Sciatic nerve (tissue), 2 donors: ENCODE measurements at regions of chr4 and their contacts with region 1.

Region 1: GRCh38 chr4:150164956-150165629 is 86.8 kb downstream of the DCLK2 start:
- DNase-seq: no peak
- ATAC-seq: no peak

Region 2: DNA sequence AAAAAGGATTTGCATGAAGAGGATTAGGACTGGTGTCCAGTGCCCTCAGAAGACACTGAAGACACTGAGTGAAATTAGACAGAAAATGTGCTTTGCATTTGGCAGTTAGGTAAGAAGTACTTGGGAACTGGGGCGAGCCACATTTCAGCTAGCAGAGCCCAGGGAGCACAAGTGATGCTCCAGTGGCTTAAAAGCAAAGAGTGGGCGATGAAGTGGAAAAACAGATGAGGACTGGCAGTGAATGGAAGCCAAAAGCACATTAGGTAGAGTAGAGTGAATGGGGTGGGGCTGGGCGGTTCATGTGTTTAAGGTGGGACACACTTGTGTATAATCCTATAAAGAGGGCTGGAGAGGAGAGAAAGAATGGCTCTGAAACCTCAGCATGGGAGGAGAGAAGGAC is 68.5 kb before region 1 on chr4:
- intact Hi-C with region 1: loop called (anchors 1 kb)
- DNase-seq: no peak
- ATAC-seq: no peak